ENCODE measurements at regions of chr6 and their contacts with region 1.

Region 1: GRCh38 chr6:99241905-99242534 is 107.5 kb downstream of the FAXC start:
- DNase-seq: peak; percentile 7
- H3K4me3 ChIP-seq: no peak overlapping the region
- H3K27ac ChIP-seq: no peak overlapping the region
- H3K4me1 ChIP-seq: no peaks in the 10 kb centered on the region
- CTCF ChIP-seq: peak; percentile 63

Region 2: DNA sequence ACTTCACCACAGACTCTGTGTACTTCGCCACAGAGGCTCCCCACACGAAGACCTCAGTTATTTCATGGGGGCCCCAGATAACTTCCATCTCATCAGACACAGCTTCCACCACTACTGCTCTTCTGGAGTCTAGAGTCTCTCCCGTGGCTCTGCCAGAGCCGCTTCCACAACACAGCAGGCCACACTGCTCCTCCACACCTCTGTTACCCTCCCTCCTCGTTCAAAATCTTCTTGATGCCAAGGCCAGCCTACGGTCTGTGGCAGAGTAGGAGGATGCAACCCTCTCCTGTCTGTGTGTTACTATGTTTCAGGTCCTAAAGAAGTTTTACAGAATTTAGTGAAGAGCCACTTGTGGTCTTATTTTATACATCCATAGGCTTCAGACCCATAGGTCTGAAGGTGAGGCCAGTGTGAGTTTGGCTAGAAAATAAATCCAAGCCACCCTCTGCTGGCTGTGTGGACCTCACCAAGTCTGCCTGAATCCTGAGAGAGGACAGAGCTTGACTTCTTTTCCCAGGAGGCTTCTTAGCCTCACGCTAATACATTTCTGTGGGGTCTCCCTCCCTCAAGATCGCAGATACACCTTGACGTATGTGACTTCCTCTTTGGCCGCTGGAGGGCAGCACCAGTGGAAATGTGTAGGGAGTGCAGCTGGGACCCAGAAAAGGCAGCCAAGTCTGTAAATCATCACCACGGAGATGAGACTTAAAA is 90.2 kb before region 1 on chr6:
- CTCF ChIA-PET with region 1: no interaction called
- POLR2A ChIA-PET with region 1: no interaction called
- intact Hi-C with region 1: loop called (anchors 10 kb)
- DNase-seq: peak; percentile 45
- H3K4me3 ChIP-seq: no peak overlapping the region
- H3K27ac ChIP-seq: no peak overlapping the region
- H3K4me1 ChIP-seq: no peaks in the 10 kb centered on the region
- CTCF ChIP-seq: peak; percentile 84